ENCODE measurements at regions of chr17 and their contacts with region 1.

Region 1: GRCh38 chr17:40417609-40418427 is at the start of gene TOP2A:
- DNase-seq: peak; percentile 97
- H3K4me3 ChIP-seq: peak within 1 kb of the TSS; percentile 81
- CTCF ChIP-seq: no peak

Region 2: GRCh38 chr17:40203131-40203530 is 214.7 kb before region 1 on chr17:
- CTCF ChIA-PET with region 1: interaction called, 10 read pairs
- POLR2A ChIA-PET with region 1: no interaction called
- DNase-seq: no peak
- H3K4me3 ChIP-seq: no peak overlapping the region
- CTCF ChIP-seq: no peak

Region 3: DNA sequence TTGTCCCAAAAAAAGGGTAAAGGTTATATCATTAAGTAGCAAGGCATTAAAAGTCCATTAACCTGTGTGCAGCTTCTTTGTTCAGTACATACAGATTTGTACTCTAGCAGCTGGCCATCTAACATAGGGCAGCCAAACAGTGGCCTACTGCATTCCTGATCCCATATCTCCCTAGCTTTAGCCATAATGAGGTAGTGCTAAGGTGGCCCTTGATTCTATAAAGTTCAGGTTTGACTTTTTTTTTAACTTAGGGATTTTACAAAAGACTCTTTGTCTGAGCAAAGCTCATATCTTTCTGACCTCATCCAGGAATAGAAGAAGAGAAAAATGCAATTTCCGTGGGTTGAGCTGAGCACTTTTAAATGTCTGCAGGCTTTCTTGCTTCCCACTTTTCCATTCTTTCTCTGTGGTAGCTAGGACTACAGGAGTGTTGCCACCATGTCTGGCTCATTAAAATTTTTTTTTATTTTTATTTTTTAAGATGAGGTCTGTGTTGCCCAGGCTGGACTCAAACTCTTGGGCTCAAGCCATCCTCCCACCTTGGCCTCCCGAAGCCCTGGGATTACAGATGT is 149.6 kb before region 1 on chr17:
- CTCF ChIA-PET with region 1: no interaction called
- POLR2A ChIA-PET with region 1: no interaction called
- DNase-seq: no peak
- H3K4me3 ChIP-seq: no peak overlapping the region
- CTCF ChIP-seq: no peak

Region 4: GRCh38 chr17:40387680-40388079 is 30.1 kb before region 1 on chr17:
- CTCF ChIA-PET with region 1: interaction called, 13 read pairs
- POLR2A ChIA-PET with region 1: no interaction called
- DNase-seq: no peak
- H3K4me3 ChIP-seq: no peak overlapping the region
- CTCF ChIP-seq: no peak

Region 5: GRCh38 chr17:40433551-40434415 is 16.0 kb after region 1 on chr17:
- CTCF ChIA-PET with region 1: interaction called, 15 read pairs
- POLR2A ChIA-PET with region 1: no interaction called
- DNase-seq: no peak
- H3K4me3 ChIP-seq: no peak overlapping the region
- CTCF ChIP-seq: peak; percentile 51

Region 6: GRCh38 chr17:40474419-40475002 is 56.7 kb after region 1 on chr17:
- CTCF ChIA-PET with region 1: interaction called, 19 read pairs
- POLR2A ChIA-PET with region 1: interaction called, 6 read pairs
- DNase-seq: no peak
- H3K4me3 ChIP-seq: no peak overlapping the region
- CTCF ChIP-seq: no peak